Activated B cell treated with CpG ODN at 0.5 μM for 24 hours (primary cell): ENCODE measurements at regions of chr18 and their contacts with region 1.

Region 1: GRCh38 chr18:3402982-3403451 is 47.0 kb upstream of the TGIF1 start:
- DNase-seq: no peak
- ATAC-seq: peak; percentile 20
- H3K4me3 Mint-ChIP-seq: peak overlapping the region; percentile 15
- H3K27ac Mint-ChIP-seq: peak overlapping the region; percentile 94
- H3K4me1 Mint-ChIP-seq: peaks cover 60% of the 10 kb centered on the region
- H3K27me3 Mint-ChIP-seq: no peaks in the 10 kb centered on the region
- CTCF ChIP-seq: no peak

Region 2: GRCh38 chr18:3177902-3178687 is 224.9 kb before region 1 on chr18:
- CTCF ChIA-PET with region 1: no interaction called
- POLR2A ChIA-PET with region 1: no interaction called
- intact Hi-C with region 1: loop called (anchors 5 kb)
- DNase-seq: peak; percentile 66
- ATAC-seq: peak; percentile 86
- H3K4me3 Mint-ChIP-seq: peak overlapping the region; percentile 76
- H3K27ac Mint-ChIP-seq: peak overlapping the region; percentile 99
- H3K4me1 Mint-ChIP-seq: peaks cover 32% of the 10 kb centered on the region
- H3K27me3 Mint-ChIP-seq: no peaks in the 10 kb centered on the region
- CTCF ChIP-seq: no peak

Region 3: GRCh38 chr18:3321133-3321812 is 81.7 kb before region 1 on chr18:
- CTCF ChIA-PET with region 1: no interaction called
- POLR2A ChIA-PET with region 1: no interaction called
- intact Hi-C with region 1: loop called (anchors 1 kb)
- DNase-seq: no peak
- ATAC-seq: no peak
- H3K4me3 Mint-ChIP-seq: no peak overlapping the region
- H3K27ac Mint-ChIP-seq: no peak overlapping the region
- H3K4me1 Mint-ChIP-seq: peaks cover 24% of the 10 kb centered on the region
- H3K27me3 Mint-ChIP-seq: no peaks in the 10 kb centered on the region
- CTCF ChIP-seq: no peak

Region 4: DNA sequence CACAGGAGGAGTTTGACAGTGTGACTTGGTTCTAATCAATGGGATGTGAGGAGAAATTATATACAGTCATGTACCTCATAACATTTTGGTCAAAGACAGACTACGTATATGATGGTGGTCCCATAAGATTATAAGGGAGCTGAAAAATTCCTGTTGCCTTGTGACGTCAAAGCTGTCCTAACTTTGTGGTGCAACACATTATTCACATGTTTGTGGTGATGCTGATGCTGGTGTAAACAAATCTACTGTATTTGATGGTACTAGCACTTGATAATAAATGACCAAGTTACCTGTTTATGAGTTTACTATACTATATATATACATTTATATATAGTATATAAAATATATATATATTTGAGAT is 17.9 kb after region 1 on chr18:
- CTCF ChIA-PET with region 1: no interaction called
- POLR2A ChIA-PET with region 1: interaction called, 5 read pairs
- intact Hi-C with region 1: loop called (anchors 2 kb)
- DNase-seq: no peak
- ATAC-seq: no peak
- H3K4me3 Mint-ChIP-seq: no peak overlapping the region
- H3K27ac Mint-ChIP-seq: no peak overlapping the region
- H3K4me1 Mint-ChIP-seq: peaks cover 4% of the 10 kb centered on the region
- H3K27me3 Mint-ChIP-seq: no peaks in the 10 kb centered on the region
- CTCF ChIP-seq: no peak

Region 5: GRCh38 chr18:3498698-3499471 is 95.9 kb after region 1 on chr18:
- CTCF ChIA-PET with region 1: no interaction called
- POLR2A ChIA-PET with region 1: interaction called, 5 read pairs
- intact Hi-C with region 1: loop called (anchors 5 kb)
- DNase-seq: peak; percentile 33
- ATAC-seq: peak; percentile 70
- H3K4me3 Mint-ChIP-seq: peak overlapping the region; percentile 80
- H3K27ac Mint-ChIP-seq: peak overlapping the region; percentile 25
- H3K4me1 Mint-ChIP-seq: peaks cover 32% of the 10 kb centered on the region
- H3K27me3 Mint-ChIP-seq: peaks cover 14% of the 10 kb centered on the region
- CTCF ChIP-seq: no peak